ENCODE measurements at regions of chr18 and their contacts with region 1.

Region 1: GRCh38 chr18:68017385-68017784 is 500.9 kb upstream of the DSEL start:
- DNase-seq: no peak
- H3K4me3 ChIP-seq: no peak overlapping the region
- H3K27ac ChIP-seq: no peak overlapping the region
- H3K4me1 ChIP-seq: no peaks in the 10 kb centered on the region
- H3K27me3 ChIP-seq: no peaks in the 10 kb centered on the region
- CTCF ChIP-seq: no peak

Region 2: DNA sequence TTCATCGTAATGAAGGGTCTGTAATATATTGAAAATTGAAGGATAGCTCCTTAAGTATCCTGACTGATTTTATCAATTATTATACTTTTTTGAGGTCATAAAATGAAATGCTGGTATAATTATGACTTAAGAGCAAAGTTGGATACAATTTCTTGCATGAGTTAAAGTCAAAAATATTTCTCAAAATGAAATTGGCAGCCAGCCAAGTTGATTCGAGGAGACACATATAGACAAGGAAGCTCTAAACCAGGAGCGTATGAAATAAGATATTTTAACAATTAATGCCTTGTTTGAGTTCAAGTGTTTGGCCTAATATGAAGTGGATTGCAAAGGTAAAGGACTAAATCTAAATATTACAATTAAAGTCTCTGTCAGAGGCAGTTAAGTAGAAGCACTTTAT is 240.5 kb before region 1 on chr18:
- CTCF ChIA-PET with region 1: interaction called, 10 read pairs
- dilution Hi-C with region 1: no loop called
- in situ Hi-C with region 1: no loop called
- intact Hi-C with region 1: no loop called
- DNase-seq: peak; percentile 13
- H3K4me3 ChIP-seq: no peak overlapping the region
- H3K27ac ChIP-seq: no peak overlapping the region
- H3K4me1 ChIP-seq: no peaks in the 10 kb centered on the region
- H3K27me3 ChIP-seq: no peaks in the 10 kb centered on the region
- CTCF ChIP-seq: no peak

Region 3: DNA sequence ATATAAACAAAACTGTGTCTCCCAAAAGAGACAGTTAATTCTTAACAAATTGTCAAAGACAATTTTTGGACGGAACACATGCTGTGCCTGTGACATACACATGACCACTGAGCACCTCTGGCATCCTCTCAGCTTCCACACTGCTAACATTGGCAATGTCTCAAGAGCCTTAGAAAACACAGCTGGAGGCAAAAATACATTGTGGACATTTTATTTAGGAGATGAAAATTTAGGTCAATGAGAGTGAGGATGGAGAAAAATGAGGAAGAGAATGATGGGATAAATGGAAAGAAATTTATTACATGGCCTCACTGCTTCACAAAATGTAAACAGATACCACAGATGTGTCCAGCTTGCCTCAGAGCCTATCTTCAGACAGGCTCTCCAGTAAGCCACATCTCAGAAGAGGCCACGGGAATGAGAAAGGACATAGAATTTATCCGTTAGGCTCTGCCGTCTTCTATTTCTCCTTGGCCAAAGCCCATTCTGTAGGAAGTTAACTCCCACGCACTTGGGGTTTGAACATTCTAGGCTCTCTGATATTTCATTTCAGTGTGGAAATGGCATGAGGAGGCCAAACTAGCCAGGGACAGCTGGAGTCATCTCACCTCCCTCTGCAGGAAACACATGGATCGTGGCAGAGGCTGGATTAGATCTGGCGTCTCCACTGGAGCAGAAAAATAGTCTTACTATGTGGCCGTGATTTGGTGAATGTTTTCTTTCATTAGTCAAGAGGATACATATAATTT is 18.6 kb after region 1 on chr18:
- CTCF ChIA-PET with region 1: no interaction called
- dilution Hi-C with region 1: no loop called
- in situ Hi-C with region 1: no loop called
- intact Hi-C with region 1: no loop called
- DNase-seq: no peak
- H3K4me3 ChIP-seq: no peak overlapping the region
- H3K27ac ChIP-seq: no peak overlapping the region
- H3K4me1 ChIP-seq: peaks cover 11% of the 10 kb centered on the region
- H3K27me3 ChIP-seq: no peaks in the 10 kb centered on the region
- CTCF ChIP-seq: no peak

Region 4: DNA sequence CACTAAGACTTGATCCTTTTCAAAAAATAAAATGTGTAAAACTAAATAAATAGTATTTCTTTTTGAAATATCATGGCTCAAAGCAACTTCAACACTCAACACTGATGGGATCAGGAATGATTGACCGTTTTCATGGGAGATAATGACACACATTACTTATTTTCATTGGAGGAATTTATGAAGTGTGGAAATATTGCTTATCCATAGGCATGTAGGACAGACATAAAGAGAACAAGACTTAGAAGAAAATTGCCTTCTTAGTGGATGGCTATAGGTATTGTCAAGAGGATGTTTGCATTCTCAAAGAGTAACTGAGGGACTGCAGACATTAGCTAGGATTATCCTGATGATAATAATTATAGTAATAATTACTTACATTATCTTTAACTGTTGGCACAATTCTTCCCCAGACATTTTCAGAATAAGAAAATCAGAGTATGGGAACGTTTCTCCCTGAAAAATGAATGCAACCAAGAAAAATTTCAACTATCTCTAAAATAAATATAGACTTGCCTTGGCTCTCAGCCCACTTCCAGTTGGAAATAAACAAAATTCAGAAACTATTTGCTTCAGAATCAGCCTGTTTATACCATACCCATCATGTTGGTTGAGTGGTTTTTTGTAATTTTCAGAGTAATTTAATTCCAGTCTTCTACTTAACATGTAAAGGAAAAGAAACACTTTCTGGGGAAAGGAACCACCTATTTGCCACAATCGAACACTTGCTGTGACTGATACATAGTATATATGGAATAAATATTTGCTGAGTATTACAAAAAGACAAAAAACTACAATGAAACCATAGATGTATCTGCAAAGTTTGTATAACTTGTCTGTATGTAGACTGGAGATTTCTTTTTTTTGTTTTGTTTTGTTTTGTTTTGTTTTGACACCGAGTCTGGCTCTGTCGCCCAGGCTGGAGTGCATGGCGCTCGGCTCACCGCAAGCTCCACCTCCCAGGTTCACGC is 531.8 kb after region 1 on chr18:
- CTCF ChIA-PET with region 1: no interaction called
- dilution Hi-C with region 1: no loop called
- in situ Hi-C with region 1: no loop called
- intact Hi-C with region 1: no loop called
- DNase-seq: no peak
- H3K4me3 ChIP-seq: no peak overlapping the region
- H3K27ac ChIP-seq: no peak overlapping the region
- H3K4me1 ChIP-seq: no peaks in the 10 kb centered on the region
- H3K27me3 ChIP-seq: no peaks in the 10 kb centered on the region
- CTCF ChIP-seq: no peak